ENCODE measurements at regions of chr14 and their contacts with region 1.

Region 1: GRCh38 chr14:30988509-30988908 is 36.9 kb upstream of the AP4S1 start:
- DNase-seq: peak; percentile 37
- H3K4me3 ChIP-seq: no peak overlapping the region
- H3K27ac ChIP-seq: no peak overlapping the region
- H3K4me1 ChIP-seq: 0 out of 2 replicates have a peak, but pooled peaks cover 7% of the 10 kb centered on the region
- H3K27me3 ChIP-seq: no peaks in the 10 kb centered on the region

Region 2: GRCh38 chr14:31070431-31070830 is 81.9 kb after region 1 on chr14:
- in situ Hi-C with region 1: loop called (anchors 10 kb)
- DNase-seq: peak; percentile 90
- H3K4me3 ChIP-seq: no peak overlapping the region
- H3K27ac ChIP-seq: peak overlapping the region; percentile 63
- H3K4me1 ChIP-seq: peaks cover 6% of the 10 kb centered on the region
- H3K27me3 ChIP-seq: no peaks in the 10 kb centered on the region

Region 3: DNA sequence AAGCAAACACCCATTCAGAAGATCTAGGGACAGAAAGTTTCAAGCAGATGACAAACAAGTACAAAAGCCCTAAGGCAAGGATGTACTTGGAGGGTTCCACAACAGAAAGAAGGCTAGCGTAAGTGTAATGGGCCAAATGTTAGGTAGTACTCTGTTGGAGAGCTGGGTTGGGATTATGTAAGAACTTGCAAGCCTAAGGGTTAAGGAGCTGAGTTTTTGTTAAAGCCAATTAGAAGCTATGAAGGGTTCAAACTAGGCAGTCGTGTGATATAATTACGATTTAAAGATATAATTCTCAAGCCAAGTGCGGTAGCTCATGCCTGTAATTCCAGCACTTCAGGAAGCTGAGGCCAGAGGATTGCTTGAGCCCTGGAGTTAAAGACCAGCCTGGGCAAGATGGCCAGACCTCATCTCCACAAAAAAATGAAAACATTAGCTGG is 177.8 kb after region 1 on chr14:
- in situ Hi-C with region 1: no loop called
- DNase-seq: peak; percentile 2
- H3K4me3 ChIP-seq: no peak overlapping the region
- H3K27ac ChIP-seq: peak overlapping the region; percentile 92
- H3K4me1 ChIP-seq: peaks cover 39% of the 10 kb centered on the region
- H3K27me3 ChIP-seq: no peaks in the 10 kb centered on the region

Measured in GM23248 (cell line).